T-cell (primary cell): ENCODE measurements at regions of chr17 and their contacts with region 1.

Region 1: GRCh38 chr17:67431249-67432048 is 54.4 kb downstream of the PITPNC1 start:
- DNase-seq: peak in 1 of 35 experiments; percentile 34
- ATAC-seq: peak in 2 of 4 experiments; percentile 12 to 17
- H3K4me3 ChIP-seq: no peak overlapping the region
- H3K4me3 Mint-ChIP-seq: peak overlapping the region in 2 of 3 donors; percentile 45 to 47
- H3K27ac ChIP-seq: peak overlapping the region; percentile 67
- H3K27ac Mint-ChIP-seq: peak overlapping the region; percentile 90 to 92
- H3K4me1 ChIP-seq: peaks cover 25 to 67% of the 10 kb centered on the region in 2 experiments
- H3K4me1 Mint-ChIP-seq: peaks cover 64 to 78% (median 77%) of the 10 kb centered on the region in 3 donors
- H3K27me3 ChIP-seq: no peaks in the 10 kb centered on the region
- H3K27me3 Mint-ChIP-seq: no peaks in the 10 kb centered on the region

Region 2: DNA sequence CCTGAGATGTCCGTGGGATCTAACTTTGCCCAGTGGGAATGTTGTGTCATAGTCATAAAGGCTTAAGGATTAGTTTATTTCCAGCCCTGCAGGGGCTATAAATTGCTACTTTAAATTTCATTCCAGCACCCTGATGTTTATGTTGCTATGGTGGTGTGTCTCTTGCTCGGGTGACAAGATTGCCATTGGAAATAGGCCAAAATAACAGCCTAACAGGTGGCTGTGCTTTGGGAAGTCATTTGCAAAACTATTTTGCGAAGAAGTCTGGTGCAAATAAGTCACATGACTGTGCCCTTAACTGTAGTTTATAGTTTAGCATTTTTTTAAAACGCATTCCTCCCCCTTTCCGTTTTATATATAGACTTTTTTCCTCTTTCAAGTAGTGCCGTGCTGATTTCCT is 31.3 kb before region 1 on chr17:
- CTCF ChIA-PET with region 1: interaction called in 1 of 2 experiments, 11 read pairs
- POLR2A ChIA-PET with region 1: interaction called in 1 of 2 experiments, 3 read pairs
- DNase-seq: peak in 7 of 35 experiments; percentile 25 to 69 (median 35)
- ATAC-seq: peak in 3 of 4 experiments; percentile 18 to 58 (median 30)
- H3K4me3 ChIP-seq: no peak overlapping the region
- H3K4me3 Mint-ChIP-seq: peak overlapping the region; percentile 54 to 75 (median 67)
- H3K27ac ChIP-seq: peak overlapping the region; percentile 75
- H3K27ac Mint-ChIP-seq: peak overlapping the region; percentile 97
- H3K4me1 ChIP-seq: peaks cover 42 to 79% of the 10 kb centered on the region in 2 experiments
- H3K4me1 Mint-ChIP-seq: peaks cover 80 to 83% (median 81%) of the 10 kb centered on the region in 3 donors
- H3K27me3 ChIP-seq: no peaks in the 10 kb centered on the region
- H3K27me3 Mint-ChIP-seq: no peaks in the 10 kb centered on the region

Region 3: DNA sequence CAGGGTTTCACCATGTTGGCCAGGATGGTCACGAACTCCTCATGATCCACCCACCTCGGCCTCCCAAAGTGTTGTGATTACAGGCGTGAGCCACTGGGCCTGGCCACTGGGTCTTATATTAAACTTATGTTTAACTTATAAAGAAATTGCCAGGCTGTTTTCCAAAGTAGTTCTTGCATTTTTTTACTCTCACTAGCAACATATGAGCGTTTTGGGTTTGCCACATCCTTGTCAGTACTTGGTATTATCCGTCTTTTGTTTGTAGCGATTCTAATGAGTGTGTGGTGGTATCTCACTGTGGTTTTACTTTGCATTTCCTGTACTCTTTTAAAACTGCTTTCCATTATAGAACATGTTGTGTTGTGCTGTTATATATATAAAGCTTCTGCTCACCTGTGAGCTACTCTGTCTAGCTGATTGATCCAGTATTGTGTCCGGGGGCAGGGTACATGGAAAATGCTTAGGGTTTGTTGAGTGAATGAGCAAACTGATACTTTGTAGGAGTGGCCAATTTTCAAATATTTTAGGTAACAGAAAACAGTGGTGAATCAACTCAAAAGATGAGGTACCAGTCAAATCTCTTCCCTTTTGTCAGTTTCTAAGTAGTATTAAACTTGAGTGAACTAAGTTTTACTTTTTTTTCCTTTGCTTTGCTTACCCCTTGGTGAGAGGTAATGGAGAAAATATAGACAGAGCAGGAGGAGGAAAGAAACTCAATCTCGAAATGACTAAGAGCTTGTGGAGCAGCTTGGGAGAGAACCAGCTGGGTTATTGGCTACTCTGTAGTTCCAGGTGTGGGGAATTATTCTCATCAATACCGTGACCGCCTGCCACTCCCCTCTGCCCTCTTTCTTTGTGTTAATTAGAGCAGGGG is 21.5 kb after region 1 on chr17:
- CTCF ChIA-PET with region 1: interaction called in 1 of 2 experiments, 3 read pairs
- POLR2A ChIA-PET with region 1: interaction called in 1 of 2 experiments, 14 read pairs
- DNase-seq: peak in 10 of 35 experiments; percentile 15 to 78 (median 36)
- ATAC-seq: peak; percentile 92 to 95 (median 94)
- H3K4me3 ChIP-seq: peak overlapping the region; percentile 20 to 27
- H3K4me3 Mint-ChIP-seq: peak overlapping the region; percentile 54 to 65 (median 62)
- H3K27ac ChIP-seq: peak overlapping the region; percentile 77
- H3K27ac Mint-ChIP-seq: peak overlapping the region; percentile 97 to 98
- H3K4me1 ChIP-seq: peaks cover 57 to 78% of the 10 kb centered on the region in 2 experiments
- H3K4me1 Mint-ChIP-seq: peaks cover 95 to 100% (median 96%) of the 10 kb centered on the region in 3 donors
- H3K27me3 ChIP-seq: no peaks in the 10 kb centered on the region
- H3K27me3 Mint-ChIP-seq: no peaks in the 10 kb centered on the region

Region 4: DNA sequence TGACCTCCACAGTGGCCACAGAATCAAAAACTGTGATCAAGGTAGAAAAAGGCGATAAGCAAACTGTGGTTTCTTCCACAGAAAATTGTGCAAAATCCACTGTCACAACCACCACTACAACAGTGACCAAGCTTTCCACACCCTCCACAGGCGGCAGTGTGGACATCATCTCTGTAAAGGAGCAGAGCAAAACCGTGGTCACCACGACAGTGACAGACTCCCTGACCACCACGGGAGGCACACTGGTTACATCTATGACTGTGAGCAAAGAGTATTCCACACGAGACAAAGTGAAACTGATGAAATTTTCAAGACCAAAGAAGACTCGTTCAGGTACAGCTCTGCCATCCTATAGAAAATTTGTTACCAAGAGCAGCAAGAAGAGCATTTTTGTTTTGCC is 481.2 kb after region 1 on chr17:
- CTCF ChIA-PET with region 1: no interaction called
- POLR2A ChIA-PET with region 1: no interaction called
- DNase-seq: peak in 5 of 35 experiments; percentile 3 to 22 (median 9)
- ATAC-seq: no peak
- H3K4me3 ChIP-seq: no peak overlapping the region
- H3K4me3 Mint-ChIP-seq: no peak overlapping the region
- H3K27ac ChIP-seq: no peak overlapping the region
- H3K27ac Mint-ChIP-seq: peak overlapping the region in 1 of 2 donors; percentile 59
- H3K4me1 ChIP-seq: no peaks in the 10 kb centered on the region
- H3K4me1 Mint-ChIP-seq: peaks cover 6 to 18% (median 16%) of the 10 kb centered on the region in 3 donors
- H3K27me3 ChIP-seq: no peaks in the 10 kb centered on the region
- H3K27me3 Mint-ChIP-seq: no peaks in the 10 kb centered on the region